ENCODE measurements at regions of chr5 and their contacts with region 1.

Region 1: GRCh38 chr5:143592648-143593047 is 189.2 kb upstream of the NR3C1 start:
- DNase-seq: no peak
- H3K4me3 Mint-ChIP-seq: no peak overlapping the region
- H3K27ac Mint-ChIP-seq: no peak overlapping the region
- H3K4me1 Mint-ChIP-seq: peaks cover 37% of the 10 kb centered on the region
- H3K27me3 Mint-ChIP-seq: no peaks in the 10 kb centered on the region

Region 2: GRCh38 chr5:141800617-141801016 is 1792.0 kb before region 1 on chr5:
- intact Hi-C with region 1: loop called (anchors 5 kb)
- DNase-seq: no peak
- H3K4me3 Mint-ChIP-seq: no peak overlapping the region
- H3K27ac Mint-ChIP-seq: no peak overlapping the region
- H3K4me1 Mint-ChIP-seq: no peaks in the 10 kb centered on the region
- H3K27me3 Mint-ChIP-seq: peaks cover 13% of the 10 kb centered on the region

Measured in activated T-helper 1 cell treated with anti-CD3 and anti-CD28 coated beads, Interleukin-12 subunit alpha, Interleukin-12 subunit beta, Interleukin-2, Interleukin-4 antibody, amounts not matched to agents 30 ng/mL and 10 ng/mL and 1 ng/mL, durations not matched to agents 14 hours and 24 hours and 36 hours (primary cell).